Uterus (tissue), 4 donors: ENCODE measurements at regions of chr19 and their contacts with region 1.

Region 1: DNA sequence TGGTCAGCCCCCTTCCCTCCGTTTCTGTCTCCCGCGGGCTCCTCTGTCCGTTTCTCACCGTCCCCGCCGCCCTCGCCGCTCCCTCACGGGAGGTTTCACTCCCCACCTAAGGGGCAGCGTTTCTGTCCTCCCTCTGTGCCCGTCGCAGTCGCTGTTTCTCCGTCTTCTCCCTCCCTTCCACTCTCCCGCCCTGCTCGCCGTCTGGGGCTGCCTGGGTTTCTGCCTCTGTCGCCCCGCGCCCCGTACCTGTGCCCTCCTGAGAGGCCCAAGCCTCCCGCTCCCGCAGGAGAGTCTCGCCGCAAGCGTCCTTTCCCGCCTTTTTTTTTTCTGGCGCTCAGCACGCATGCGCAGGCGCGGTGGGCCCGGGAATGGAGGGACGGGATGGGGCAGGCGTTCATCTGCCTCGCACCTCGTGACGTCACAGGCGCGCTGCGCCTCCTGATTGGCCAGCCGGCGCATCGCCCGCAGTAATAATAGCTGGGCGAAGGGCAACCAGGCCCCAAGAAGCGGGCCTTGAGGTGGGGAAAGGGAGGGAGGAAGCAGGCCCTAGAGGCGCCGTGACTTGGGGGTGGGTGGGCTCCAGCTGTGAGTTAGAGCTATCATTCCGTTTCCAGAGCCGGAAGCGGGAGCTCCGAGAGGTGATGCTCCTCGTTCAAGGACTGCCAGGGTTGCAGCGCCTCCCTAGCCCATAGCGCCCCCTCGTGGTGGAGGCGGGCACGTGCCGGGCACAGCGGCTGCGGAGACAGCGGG is 15.4 kb downstream of the SSC5D start:
- DNase-seq: peak; percentile 91 to 92
- H3K4me3 ChIP-seq: peak overlapping the region; percentile 29 to 31
- H3K27ac ChIP-seq: peak overlapping the region; percentile 66
- H3K4me1 ChIP-seq: peaks cover 0 to 7% of the 10 kb centered on the region in 2 donors
- H3K27me3 ChIP-seq: no peaks in the 10 kb centered on the region
- CTCF ChIP-seq: peak; percentile 97 to 99 (median 98)
- POLR2A ChIP-seq: peak in 1 of 2 donors; percentile 22

Region 2: GRCh38 chr19:55467236-55468053 is 36.2 kb before region 1 on chr19:
- intact Hi-C with region 1: loop called (anchors 5 kb)
- DNase-seq: peak; percentile 65 to 79
- H3K4me3 ChIP-seq: no peak overlapping the region
- H3K27ac ChIP-seq: peak overlapping the region in 1 of 2 donors; percentile 47
- H3K4me1 ChIP-seq: no peaks in the 10 kb centered on the region
- H3K27me3 ChIP-seq: no peaks in the 10 kb centered on the region
- CTCF ChIP-seq: peak; percentile 91 to 99 (median 96)
- POLR2A ChIP-seq: no peak